ENCODE measurements at regions of chr1 and their contacts with region 1.

Region 1: DNA sequence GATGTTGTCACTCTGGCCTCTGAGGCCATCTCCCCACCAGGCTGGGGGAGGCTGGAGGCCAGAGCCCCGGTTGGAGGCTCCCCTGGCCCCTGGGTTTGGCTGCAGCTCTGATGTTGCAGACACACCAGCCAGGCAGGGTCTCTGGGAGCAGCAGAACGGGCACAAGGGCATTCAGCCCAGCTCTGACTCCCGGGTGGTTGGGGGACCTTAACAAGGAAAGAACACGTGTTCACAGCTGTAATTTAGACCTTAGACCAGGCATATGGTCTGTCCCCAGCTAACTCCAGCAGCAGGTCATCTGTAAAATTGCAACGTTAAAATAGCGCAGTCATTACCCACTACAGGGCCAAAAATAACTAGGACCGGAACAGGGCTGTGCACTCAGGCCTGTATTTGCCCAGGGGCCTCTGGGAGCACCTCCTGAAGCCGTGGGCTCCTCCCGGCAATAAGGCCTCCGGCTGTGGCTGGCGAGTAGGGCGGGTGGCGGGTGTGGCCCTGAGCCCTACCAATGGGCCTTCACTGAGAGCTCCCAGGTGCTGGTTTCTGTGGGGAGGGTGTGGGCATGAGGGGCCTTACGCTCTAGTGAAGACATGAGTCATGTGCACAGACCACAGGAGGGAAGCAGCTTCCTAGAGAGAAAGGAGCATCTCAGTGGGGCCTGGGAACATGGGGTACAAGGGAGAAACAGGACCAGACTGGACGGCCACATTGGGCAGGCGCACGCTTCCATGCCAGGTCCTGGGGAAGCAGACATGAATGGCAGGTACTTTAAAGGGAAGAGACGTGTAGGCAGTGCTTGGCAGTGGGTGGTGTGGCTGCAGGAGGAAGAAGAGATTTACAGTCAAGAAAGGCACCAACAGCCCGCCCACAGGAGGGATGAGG is 6.1 kb downstream of the LDLRAP1 start:
- DNase-seq: peak; percentile 71 to 92 (median 72)
- H3K4me3 ChIP-seq: peak overlapping the region in 1 of 2 donors; percentile 23
- H3K4me3 Mint-ChIP-seq: peak overlapping the region; percentile 72 to 93 (median 80)
- H3K27ac ChIP-seq: peak overlapping the region; percentile 67
- H3K27ac Mint-ChIP-seq: peak overlapping the region; percentile 75 to 99 (median 96)
- H3K4me1 ChIP-seq: peaks cover 98% of the 10 kb centered on the region
- H3K4me1 Mint-ChIP-seq: peaks cover 68 to 98% (median 92%) of the 10 kb centered on the region in 4 donors
- H3K27me3 ChIP-seq: no peaks in the 10 kb centered on the region
- H3K27me3 Mint-ChIP-seq: no peaks in the 10 kb centered on the region

Region 2: DNA sequence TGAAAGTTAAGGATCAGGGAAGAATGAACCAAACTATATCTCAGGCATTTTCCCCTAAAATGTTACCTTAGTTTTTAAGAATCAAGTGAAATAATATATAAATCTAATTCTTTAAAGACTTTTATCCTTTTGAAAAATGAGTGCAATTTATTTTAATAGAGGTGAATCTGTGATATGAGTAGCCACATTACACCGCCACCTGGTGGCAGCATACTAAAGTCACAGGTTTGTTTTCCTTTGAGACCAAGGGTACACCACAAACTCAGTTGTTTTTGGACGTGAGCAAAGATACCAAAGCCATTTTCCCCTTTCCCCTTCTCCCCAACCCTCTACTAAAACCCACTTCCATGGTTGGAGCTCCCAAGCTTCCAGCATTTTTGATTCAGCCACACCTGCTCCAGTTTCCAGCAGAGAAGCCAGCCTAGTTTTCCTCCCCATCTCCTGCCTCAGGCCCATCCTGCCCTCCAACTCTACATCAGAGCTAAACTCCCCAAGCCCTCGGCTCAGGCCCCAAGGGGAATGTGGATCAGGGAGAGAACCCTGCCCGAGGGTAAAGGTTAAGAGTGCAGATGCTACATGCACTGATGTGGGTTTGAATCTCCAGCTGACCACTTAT is 29.0 kb before region 1 on chr1:
- CTCF ChIA-PET with region 1: interaction called, 20 read pairs
- POLR2A ChIA-PET with region 1: interaction called, 3 read pairs
- intact Hi-C with region 1: no loop called
- DNase-seq: peak; percentile 61 to 66 (median 62)
- H3K4me3 ChIP-seq: no peak overlapping the region
- H3K4me3 Mint-ChIP-seq: no peak overlapping the region
- H3K27ac ChIP-seq: no peak overlapping the region
- H3K27ac Mint-ChIP-seq: peak overlapping the region in 5 of 7 donors; percentile 68 to 84 (median 78)
- H3K4me1 ChIP-seq: peaks cover 5% of the 10 kb centered on the region
- H3K4me1 Mint-ChIP-seq: peaks cover 6 to 10% (median 8%) of the 10 kb centered on the region in 4 donors
- H3K27me3 ChIP-seq: no peaks in the 10 kb centered on the region
- H3K27me3 Mint-ChIP-seq: peaks cover 0 to 2% of the 10 kb centered on the region in 2 donors

Region 3: GRCh38 chr1:25538191-25538761 is 11.2 kb before region 1 on chr1:
- CTCF ChIA-PET with region 1: interaction called, 11 read pairs
- POLR2A ChIA-PET with region 1: interaction called, 615 read pairs
- intact Hi-C with region 1: no loop called
- DNase-seq: no peak
- H3K4me3 ChIP-seq: no peak overlapping the region
- H3K4me3 Mint-ChIP-seq: no peak overlapping the region
- H3K27ac ChIP-seq: no peak overlapping the region
- H3K27ac Mint-ChIP-seq: peak overlapping the region in 3 of 7 donors; percentile 5 to 42 (median 9)
- H3K4me1 ChIP-seq: no peaks in the 10 kb centered on the region
- H3K4me1 Mint-ChIP-seq: peaks cover 3 to 10% (median 5%) of the 10 kb centered on the region in 4 donors
- H3K27me3 ChIP-seq: no peaks in the 10 kb centered on the region
- H3K27me3 Mint-ChIP-seq: no peaks in the 10 kb centered on the region

Region 4: DNA sequence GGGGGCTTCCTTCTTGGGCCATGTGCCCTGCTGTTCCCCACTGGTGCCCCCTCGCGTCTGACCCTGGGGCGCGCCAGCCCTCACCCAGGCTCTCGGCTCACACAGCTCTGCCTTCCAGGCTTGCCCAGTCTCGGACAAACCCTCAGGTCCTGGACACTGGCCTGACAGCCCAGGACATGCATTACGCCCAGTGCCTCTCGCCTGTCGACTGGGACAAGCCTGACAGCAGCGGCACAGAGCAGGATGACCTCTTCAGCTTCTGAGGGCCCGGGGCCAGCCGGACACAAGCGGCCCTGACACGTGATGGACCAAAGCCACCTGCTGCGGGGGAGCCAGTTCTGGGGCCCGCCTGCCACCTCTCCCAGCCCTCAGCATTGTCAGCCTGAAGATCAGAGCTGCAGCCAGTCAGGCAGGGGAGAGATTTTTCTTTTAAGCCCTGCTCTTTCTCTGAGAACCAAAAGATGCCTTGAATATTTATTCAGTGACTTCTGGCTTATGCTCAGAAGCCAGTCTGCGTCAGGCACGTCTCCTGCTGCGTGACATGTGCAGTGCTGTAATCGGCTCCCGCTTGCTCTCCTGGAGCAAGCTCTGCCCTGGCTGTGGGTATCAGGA is 17.3 kb after region 1 on chr1:
- CTCF ChIA-PET with region 1: interaction called, 20 read pairs
- POLR2A ChIA-PET with region 1: interaction called, 615 read pairs
- intact Hi-C with region 1: loop called (anchors 1 kb)
- DNase-seq: peak in 1 of 5 donors; percentile 46
- H3K4me3 ChIP-seq: no peak overlapping the region
- H3K4me3 Mint-ChIP-seq: peak overlapping the region in 5 of 8 donors; percentile 13 to 88 (median 68)
- H3K27ac ChIP-seq: no peak overlapping the region
- H3K27ac Mint-ChIP-seq: peak overlapping the region in 6 of 7 donors; percentile 32 to 95 (median 73)
- H3K4me1 ChIP-seq: peaks cover 76% of the 10 kb centered on the region
- H3K4me1 Mint-ChIP-seq: peaks cover 35 to 93% (median 60%) of the 10 kb centered on the region in 4 donors
- H3K27me3 ChIP-seq: no peaks in the 10 kb centered on the region
- H3K27me3 Mint-ChIP-seq: no peaks in the 10 kb centered on the region

Region 5: DNA sequence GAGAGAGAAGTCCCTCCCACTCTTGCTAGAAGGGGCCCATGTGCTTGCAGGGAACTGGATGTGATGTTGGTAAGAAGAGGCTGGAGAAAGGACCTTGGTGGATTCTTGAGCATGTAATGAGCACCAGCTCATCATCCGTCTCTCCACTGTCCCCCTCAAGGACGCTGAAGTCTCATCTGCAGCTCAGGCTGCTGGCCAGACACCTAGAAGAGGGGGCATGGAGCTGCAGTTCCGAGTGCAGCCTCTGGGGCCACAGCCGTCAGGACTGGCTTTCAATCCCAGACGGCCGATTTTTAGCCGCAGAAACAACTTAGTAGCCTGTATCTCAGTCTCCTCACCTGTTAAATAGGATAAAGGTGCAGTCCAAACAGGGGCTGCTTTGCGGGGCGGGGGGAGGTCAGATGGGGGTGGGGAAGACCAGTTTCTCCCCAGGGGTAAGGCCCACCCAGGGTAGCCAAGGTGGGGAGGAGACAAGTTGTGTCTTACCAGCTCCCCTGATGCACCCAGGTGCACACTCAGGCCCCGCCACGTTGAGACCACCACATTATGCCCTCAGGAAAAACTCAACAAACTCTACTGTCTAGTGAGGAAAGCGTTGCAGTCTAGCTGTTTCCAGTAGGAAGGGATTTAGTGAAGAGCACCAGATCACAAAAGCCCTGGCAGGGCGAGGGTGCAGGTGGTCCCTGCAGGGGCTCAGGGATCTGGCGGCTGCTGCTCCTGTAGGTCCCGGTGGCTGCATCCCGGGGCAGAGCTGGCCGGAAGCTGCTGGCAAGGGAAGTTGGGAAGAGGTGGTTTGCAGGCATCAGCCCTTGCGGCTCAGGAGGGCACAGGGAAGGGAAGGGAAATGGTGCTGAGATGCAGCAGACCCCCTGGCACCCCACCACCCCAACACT is 23.4 kb after region 1 on chr1:
- CTCF ChIA-PET with region 1: interaction called, 20 read pairs
- POLR2A ChIA-PET with region 1: interaction called, 615 read pairs
- intact Hi-C with region 1: no loop called
- DNase-seq: peak in 4 of 5 donors; percentile 29 to 41 (median 36)
- H3K4me3 ChIP-seq: no peak overlapping the region
- H3K4me3 Mint-ChIP-seq: no peak overlapping the region
- H3K27ac ChIP-seq: no peak overlapping the region
- H3K27ac Mint-ChIP-seq: peak overlapping the region in 6 of 7 donors; percentile 27 to 77 (median 68)
- H3K4me1 ChIP-seq: peaks cover 31% of the 10 kb centered on the region
- H3K4me1 Mint-ChIP-seq: peaks cover 10 to 57% (median 30%) of the 10 kb centered on the region in 4 donors
- H3K27me3 ChIP-seq: no peaks in the 10 kb centered on the region
- H3K27me3 Mint-ChIP-seq: no peaks in the 10 kb centered on the region

Measured in CD4-positive, alpha-beta memory T cell (primary cell).